Activated CD4-positive, alpha-beta T cell treated with anti-CD3 and anti-CD28 coated beads, Interleukin-2, amount 10 ng/mL, durations not matched to agents 24 days and 14 days (primary cell): ENCODE measurements at regions of chr6 and their contacts with region 1.

Region 1: DNA sequence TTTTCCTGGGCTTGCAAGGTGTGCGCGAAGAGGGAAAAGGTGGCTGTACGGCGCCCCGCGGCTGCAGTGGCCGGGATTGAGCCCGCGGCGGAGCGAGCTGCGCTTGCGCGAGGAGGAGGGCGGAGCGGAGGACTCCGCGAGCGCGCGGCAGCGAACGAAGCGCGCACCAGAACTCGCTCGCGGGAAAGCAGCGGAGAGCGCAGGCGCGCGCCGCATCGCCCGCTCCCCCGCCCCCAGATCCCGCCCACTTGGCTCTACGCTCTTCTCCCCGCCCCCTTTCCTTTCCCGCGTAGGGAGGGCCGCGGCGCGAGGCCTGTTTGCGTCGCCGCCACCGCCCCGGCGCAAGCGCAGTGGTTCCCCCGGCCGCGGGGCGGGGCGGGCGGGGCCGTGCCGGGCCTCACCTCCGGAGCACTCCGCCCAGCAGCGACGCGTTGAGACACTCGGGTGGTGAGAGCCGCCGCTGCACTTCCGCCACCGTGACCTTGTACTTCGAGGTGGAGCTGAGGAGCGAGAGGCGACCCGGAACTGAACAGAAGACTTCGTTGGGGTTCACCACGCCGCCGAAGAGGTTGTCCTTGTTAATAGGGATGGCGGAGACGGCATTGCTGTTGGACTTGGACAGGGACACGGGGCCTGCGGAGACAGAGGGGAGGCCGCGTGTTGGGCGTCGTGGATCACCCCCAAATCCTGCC is 10.6 kb downstream of the TFAP2A start:
- DNase-seq: peak; percentile 97
- H3K4me3 Mint-ChIP-seq: peak overlapping the region; percentile 83
- H3K27ac Mint-ChIP-seq: peak overlapping the region; percentile 82
- H3K4me1 Mint-ChIP-seq: peaks cover 4% of the 10 kb centered on the region
- H3K27me3 Mint-ChIP-seq: peaks cover 74% of the 10 kb centered on the region

Region 2: DNA sequence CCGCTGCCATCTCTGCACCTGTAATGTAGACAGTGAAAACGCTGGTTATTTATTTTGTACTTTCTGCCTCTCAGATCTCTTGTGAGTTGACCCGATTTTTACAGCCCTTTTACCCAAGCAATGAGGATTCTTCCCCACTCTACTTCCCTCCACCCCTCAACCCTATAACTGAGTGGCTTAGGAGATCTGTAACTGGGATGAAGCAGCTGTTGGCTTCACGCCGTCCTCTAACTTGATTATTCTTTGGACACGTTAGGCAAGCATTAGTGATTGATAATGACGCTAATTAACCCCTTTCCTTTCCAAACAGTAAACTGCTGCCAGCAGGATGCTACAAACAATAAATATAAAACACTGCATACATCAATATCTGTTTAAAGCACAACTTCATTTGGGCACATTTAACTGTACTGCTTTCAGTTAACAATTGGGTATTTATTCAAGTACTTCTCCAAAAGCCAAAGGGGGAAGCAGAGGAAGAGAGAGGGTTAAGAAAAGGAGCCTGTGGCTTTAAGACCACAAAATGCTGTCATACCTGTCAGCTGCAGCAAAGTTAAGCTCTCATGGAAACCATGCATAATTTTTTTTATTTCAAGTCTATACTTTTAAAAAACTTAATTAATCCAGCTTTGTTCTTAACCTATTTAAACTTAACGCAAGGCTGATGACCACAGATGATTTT is 10.6 kb before region 1 on chr6:
- intact Hi-C with region 1: no loop called
- DNase-seq: no peak
- H3K4me3 Mint-ChIP-seq: no peak overlapping the region
- H3K27ac Mint-ChIP-seq: no peak overlapping the region
- H3K4me1 Mint-ChIP-seq: no peaks in the 10 kb centered on the region
- H3K27me3 Mint-ChIP-seq: peaks cover 89% of the 10 kb centered on the region

Region 3: GRCh38 chr6:10424007-10424406 is 19.8 kb after region 1 on chr6:
- intact Hi-C with region 1: loop called (anchors 2 kb)
- DNase-seq: no peak
- H3K4me3 Mint-ChIP-seq: no peak overlapping the region
- H3K27ac Mint-ChIP-seq: no peak overlapping the region
- H3K4me1 Mint-ChIP-seq: peaks cover 5% of the 10 kb centered on the region
- H3K27me3 Mint-ChIP-seq: peaks cover 87% of the 10 kb centered on the region

Region 4: DNA sequence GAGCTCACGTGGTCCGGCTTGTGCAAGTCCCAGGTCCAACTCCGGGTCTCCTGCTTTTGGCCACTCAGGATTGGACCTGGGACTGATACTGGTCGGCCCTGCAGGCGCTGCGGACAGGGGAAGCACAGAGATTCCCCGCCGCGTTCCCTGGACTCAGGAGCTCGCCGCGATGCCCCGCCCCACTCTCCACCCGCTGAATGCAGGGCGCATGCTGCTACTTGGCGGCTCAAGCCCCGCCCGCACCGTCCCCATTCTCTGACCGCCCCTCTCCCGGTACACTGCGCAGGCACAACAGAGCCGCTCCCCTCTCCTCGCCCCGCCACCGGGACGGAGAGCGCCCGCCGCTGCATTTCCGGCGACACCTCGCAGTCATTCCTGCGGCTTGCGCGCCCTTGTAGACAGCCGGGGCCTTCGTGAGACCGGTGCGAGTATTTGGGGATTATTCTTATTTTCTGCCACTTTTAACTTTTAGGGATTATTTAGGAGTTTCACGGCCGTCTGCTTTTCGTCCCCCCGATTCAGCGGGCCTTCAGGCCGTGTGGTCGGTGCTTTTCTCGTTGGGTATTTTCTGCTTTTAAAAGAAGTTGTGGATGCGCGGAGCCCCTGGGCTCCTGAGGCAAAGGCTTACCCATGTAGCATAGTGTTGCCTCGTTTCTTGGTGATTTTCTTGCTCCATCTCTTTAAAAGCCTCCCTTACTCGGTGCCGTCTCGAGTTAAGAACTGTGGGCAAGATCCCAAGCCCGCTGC is 318.7 kb after region 1 on chr6 and contains the start of gene TMEM14C:
- intact Hi-C with region 1: loop called (anchors 10 kb)
- DNase-seq: peak; percentile 97
- H3K4me3 Mint-ChIP-seq: peak within 1 kb of the TSS; percentile 89
- H3K27ac Mint-ChIP-seq: peak within 1 kb of the TSS; percentile 93
- H3K4me1 Mint-ChIP-seq: peaks cover 27% of the 10 kb centered on the region
- H3K27me3 Mint-ChIP-seq: no peaks in the 10 kb centered on the region
- total RNA-seq, gene TMEM14C: 65.0 and 67.7 TPM in 2 replicates